Right ventricle myocardium inferior (tissue), 1 donor: ENCODE measurements at regions of chr7 and their contacts with region 1.

Region 1: DNA sequence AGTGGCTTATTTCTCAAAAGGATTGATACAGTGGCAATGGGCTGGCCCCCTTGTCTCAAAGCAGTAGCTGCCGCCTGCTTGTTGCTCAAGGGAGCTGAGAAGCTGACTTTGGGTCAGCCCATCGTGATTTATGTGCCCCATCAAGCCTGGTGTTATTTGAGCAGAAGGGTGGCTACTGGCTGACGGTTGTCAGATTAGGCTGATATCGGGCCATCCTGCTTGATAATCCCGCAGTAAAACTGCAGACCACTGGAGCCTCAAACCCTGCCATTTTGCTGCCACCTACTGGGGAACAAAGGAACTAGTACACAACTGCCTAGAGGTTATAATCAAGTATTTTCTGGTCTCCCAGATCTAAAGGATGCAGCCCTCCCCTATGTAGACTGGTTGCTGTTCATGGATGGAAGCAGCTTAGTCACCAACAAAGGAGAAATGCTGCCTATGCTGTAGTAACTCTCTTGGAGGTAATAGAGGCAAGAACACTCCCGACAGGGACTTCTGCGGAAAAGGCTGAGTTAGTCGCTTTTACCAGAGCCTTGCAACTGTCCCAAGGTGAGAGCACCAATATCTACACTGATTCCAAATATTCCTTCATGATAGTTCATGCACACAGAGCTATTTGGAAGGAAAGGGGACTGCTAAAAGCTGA is 65.9 kb upstream of the ZNF92 start:
- DNase-seq: no peak
- ATAC-seq: peak; percentile 60

Region 2: GRCh38 chr7:64951250-64951848 is 356.4 kb before region 1 on chr7:
- intact Hi-C with region 1: loop called (anchors 1 kb)
- DNase-seq: no peak
- ATAC-seq: no peak

Region 3: GRCh38 chr7:65216459-65216858 is 91.3 kb before region 1 on chr7:
- intact Hi-C with region 1: loop called (anchors 2 kb)
- DNase-seq: peak; percentile 70
- ATAC-seq: no peak

Region 4: DNA sequence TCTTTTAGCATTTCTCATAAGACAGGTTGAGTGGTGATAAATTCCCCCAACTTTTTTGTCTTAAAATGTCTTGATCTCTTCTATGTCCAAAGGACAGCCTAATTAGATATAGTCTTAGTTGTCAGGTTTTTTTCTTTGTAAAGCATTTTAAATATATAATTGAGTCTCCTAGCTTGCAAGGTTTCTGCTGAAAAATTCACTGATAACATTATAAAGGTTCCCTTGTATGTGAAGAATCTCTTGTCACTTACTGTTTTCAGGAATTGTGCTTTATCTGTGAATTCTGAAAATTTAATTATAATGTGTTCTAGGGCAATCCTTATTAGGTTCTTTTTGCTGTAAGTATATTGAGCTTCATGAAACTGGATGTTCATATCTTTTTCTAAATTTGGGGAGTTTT is 31.0 kb before region 1 on chr7:
- intact Hi-C with region 1: no loop called
- DNase-seq: no peak
- ATAC-seq: no peak